Dendritic cell treated with granulocyte-macrophage colony-stimulating factor and Interleukin-4, amounts not matched to agents 40 ng/mL and 50 ng/mL, for 4 days (primary cell): ENCODE measurements at regions of chrX and their contacts with region 1.

Region 1: GRCh38 chrX:155068165-155068564 is 2.8 kb downstream of the CMC4 start:
- H3K4me3 Mint-ChIP-seq: no peak overlapping the region
- H3K27ac Mint-ChIP-seq: no peak overlapping the region
- H3K4me1 Mint-ChIP-seq: peaks cover 30% of the 10 kb centered on the region
- H3K27me3 Mint-ChIP-seq: no peaks in the 10 kb centered on the region

Region 2: DNA sequence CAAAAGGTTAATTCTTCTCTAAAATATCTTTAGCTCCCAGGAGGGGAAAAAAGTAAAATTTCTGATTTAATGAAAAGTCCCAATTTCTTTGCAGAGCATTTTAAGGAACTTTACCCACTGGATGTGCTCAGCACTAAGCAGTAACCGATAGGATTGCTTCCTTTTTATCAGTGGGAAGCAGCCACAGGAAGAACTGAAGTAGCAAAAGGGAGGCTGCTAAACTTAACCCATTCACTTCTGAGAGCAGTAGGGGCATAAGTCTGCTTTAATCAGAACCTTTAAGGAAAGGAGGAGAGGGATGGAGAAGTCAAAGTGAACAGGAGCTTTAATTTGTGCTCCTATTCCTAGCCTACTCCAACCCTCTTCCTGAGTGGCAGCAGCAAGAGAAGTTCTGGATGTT is 45.6 kb before region 1 on chrX and contains the start of gene F8:
- intact Hi-C with region 1: loop called (anchors 5 kb)
- H3K4me3 Mint-ChIP-seq: no peak within 1 kb of the TSS
- H3K27ac Mint-ChIP-seq: no peak within 1 kb of the TSS
- H3K4me1 Mint-ChIP-seq: peaks cover 20% of the 10 kb centered on the region
- H3K27me3 Mint-ChIP-seq: no peaks in the 10 kb centered on the region

Region 3: GRCh38 chrX:155247497-155247896 is 179.3 kb after region 1 on chrX:
- intact Hi-C with region 1: no loop called
- H3K4me3 Mint-ChIP-seq: no peak overlapping the region
- H3K27ac Mint-ChIP-seq: no peak overlapping the region
- H3K4me1 Mint-ChIP-seq: peaks cover 10% of the 10 kb centered on the region
- H3K27me3 Mint-ChIP-seq: no peaks in the 10 kb centered on the region